ENCODE measurements at regions of chr18 and their contacts with region 1.

Region 1: GRCh38 chr18:10977042-10977441 is 172.3 kb downstream of the PIEZO2 start:
- DNase-seq: no peak
- H3K4me3 ChIP-seq: no peak overlapping the region
- H3K27ac ChIP-seq: no peak overlapping the region
- H3K4me1 ChIP-seq: no peaks in the 10 kb centered on the region
- H3K27me3 ChIP-seq: no peaks in the 10 kb centered on the region
- CTCF ChIP-seq: no peak

Region 2: DNA sequence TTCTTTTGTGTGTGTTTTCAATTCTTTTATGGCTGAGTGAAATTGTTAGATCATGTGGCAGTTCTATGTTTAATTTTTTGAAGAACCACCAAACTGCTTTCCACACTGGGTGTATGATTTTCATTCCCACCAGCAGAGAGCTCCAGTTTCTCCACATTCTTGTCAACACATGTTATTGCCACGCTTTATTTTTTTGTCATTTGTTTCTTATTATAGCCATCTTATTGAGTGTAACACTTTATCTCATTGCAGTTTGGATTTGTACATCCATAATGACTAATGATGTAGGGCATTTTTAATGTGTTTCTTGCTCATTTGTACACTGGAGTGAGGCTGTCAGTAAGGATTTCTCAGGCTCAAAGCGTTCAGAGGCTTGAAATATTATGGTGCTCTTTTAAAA is 11.9 kb before region 1 on chr18:
- CTCF ChIA-PET with region 1: no interaction called
- POLR2A ChIA-PET with region 1: no interaction called
- intact Hi-C with region 1: loop called (anchors 1 kb)
- DNase-seq: no peak
- H3K4me3 ChIP-seq: no peak overlapping the region
- H3K27ac ChIP-seq: no peak overlapping the region
- H3K4me1 ChIP-seq: no peaks in the 10 kb centered on the region
- H3K27me3 ChIP-seq: peaks cover 5% of the 10 kb centered on the region
- CTCF ChIP-seq: no peak

Region 3: GRCh38 chr18:11649839-11650238 is 672.8 kb after region 1 on chr18:
- CTCF ChIA-PET with region 1: no interaction called
- POLR2A ChIA-PET with region 1: no interaction called
- intact Hi-C with region 1: no loop called
- DNase-seq: no peak
- H3K4me3 ChIP-seq: no peak overlapping the region
- H3K27ac ChIP-seq: no peak overlapping the region
- H3K4me1 ChIP-seq: no peaks in the 10 kb centered on the region
- H3K27me3 ChIP-seq: peaks cover 23% of the 10 kb centered on the region
- CTCF ChIP-seq: no peak